Endothelial cell of umbilical vein (primary cell): ENCODE measurements at regions of chr11 and their contacts with region 1.

Region 1: GRCh38 chr11:108497317-108498045 is 703 bp downstream of the POGLUT3 start:
- DNase-seq: peak; percentile 99
- H3K4me3 ChIP-seq: peak overlapping the region; percentile 26 to 71 (median 48)
- H3K27ac ChIP-seq: peak overlapping the region; percentile 81
- H3K4me1 ChIP-seq: peaks cover 10% of the 10 kb centered on the region
- H3K27me3 ChIP-seq: no peaks in the 10 kb centered on the region
- CTCF ChIP-seq: no peak
- POLR2A ChIP-seq: peak; percentile 89

Region 2: DNA sequence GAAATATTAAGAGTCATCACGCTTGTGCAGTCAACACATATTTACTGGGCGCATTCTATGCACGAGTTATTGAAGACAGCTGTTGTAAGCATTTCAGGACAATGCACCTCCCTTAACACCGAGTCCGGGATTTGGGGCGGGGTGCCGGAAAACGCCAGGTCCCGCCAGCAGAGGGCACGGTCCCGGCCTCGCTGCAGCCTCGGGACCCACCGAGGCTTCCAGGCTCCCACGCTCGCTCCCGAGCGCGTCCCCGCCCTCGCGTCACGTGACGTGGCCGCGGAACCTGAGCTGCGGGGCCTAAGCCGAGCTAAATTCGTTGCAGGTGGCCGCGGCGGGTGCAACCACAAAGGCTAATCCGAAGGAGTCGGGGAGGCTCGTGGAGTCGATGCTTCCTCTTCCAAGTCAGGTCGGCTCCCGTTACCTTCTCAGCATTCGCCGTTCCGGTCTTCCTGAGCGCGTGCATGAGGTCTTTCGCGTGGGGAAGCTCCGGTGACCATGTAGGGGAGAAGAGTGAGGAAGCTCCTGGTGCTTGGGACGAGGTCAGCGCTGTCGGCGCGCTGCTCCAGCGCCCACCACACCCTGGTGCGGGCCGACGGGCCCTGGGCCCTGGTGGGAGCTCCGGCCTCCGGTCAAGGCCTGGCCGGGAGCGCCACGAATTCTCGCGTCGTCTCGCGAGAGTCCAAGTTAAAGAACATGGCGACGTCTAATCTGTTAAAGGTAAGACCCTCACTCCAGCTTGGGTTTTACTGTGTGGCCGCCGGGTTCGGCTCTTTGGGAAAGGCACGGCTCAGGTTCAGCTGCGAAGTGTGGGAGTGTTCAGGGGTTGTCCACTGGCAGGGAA is 488.6 kb before region 1 on chr11 and contains the start of gene CUL5:
- CTCF ChIA-PET with region 1: no interaction called
- POLR2A ChIA-PET with region 1: no interaction called
- dilution Hi-C with region 1: no loop called
- intact Hi-C with region 1: loop called (anchors 2 kb)
- DNase-seq: peak; percentile 90
- H3K4me3 ChIP-seq: peak within 1 kb of the TSS; percentile 44 to 88 (median 60)
- H3K27ac ChIP-seq: peak within 1 kb of the TSS; percentile 75
- H3K4me1 ChIP-seq: peaks cover 12% of the 10 kb centered on the region
- H3K27me3 ChIP-seq: no peaks in the 10 kb centered on the region
- CTCF ChIP-seq: peak; percentile 91 to 96
- POLR2A ChIP-seq: peak; percentile 91
- total RNA-seq, gene CUL5: 36.6 and 37.6 TPM in 2 replicates

Region 3: GRCh38 chr11:108237058-108237481 is 260.4 kb before region 1 on chr11:
- CTCF ChIA-PET with region 1: no interaction called
- POLR2A ChIA-PET with region 1: no interaction called
- dilution Hi-C with region 1: no loop called
- intact Hi-C with region 1: loop called (anchors 5 kb)
- DNase-seq: no peak
- H3K4me3 ChIP-seq: no peak overlapping the region
- H3K27ac ChIP-seq: peak overlapping the region; percentile 94
- H3K4me1 ChIP-seq: peaks cover 16% of the 10 kb centered on the region
- H3K27me3 ChIP-seq: no peaks in the 10 kb centered on the region
- CTCF ChIP-seq: no peak
- POLR2A ChIP-seq: no peak

Region 4: DNA sequence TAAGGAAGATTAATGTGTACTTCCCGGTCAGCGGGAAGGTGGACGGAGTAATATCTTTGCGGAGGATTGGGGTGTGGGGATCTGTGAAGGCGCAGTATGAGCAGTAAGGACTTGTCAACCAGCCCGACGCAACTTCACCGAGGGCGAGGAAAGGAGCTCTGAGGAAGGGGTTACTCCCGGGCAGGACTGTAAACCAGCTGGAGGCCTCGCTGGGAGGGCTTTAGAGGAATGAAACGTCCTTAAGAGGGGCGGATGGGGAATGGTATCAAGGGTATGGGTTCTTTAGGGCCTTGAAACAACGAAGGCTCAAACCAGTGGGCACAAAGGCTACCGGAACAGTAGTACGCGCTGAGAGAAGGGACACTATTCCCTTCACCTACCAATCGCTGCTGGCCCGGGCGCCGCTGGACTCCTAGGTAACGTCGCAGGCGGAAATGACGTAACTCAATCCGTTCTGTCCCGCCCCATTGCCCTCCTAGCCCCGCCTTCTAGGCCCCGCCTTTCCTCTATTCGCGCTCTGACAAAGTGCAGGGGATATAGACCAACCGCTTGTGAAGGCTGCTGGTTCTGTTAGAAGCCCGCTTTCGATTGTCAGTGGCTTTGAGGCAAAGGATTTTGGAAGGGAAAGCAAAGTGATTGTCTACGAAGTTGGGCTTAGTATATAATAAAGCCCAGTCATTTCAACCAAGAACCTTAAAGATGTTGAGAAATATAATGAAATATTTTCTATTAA is 30.2 kb before region 1 on chr11 and contains the start of gene C11orf65:
- CTCF ChIA-PET with region 1: no interaction called
- POLR2A ChIA-PET with region 1: interaction called, 3 read pairs
- dilution Hi-C with region 1: no loop called
- intact Hi-C with region 1: loop called (anchors 1 kb)
- DNase-seq: peak; percentile 99
- H3K4me3 ChIP-seq: peak within 1 kb of the TSS; percentile 38 to 86 (median 62)
- H3K27ac ChIP-seq: peak within 1 kb of the TSS; percentile 97
- H3K4me1 ChIP-seq: peaks cover 3% of the 10 kb centered on the region
- H3K27me3 ChIP-seq: no peaks in the 10 kb centered on the region
- CTCF ChIP-seq: no peak
- POLR2A ChIP-seq: peak; percentile 97
- total RNA-seq, gene C11orf65: not detected in 2 replicates

Region 5: DNA sequence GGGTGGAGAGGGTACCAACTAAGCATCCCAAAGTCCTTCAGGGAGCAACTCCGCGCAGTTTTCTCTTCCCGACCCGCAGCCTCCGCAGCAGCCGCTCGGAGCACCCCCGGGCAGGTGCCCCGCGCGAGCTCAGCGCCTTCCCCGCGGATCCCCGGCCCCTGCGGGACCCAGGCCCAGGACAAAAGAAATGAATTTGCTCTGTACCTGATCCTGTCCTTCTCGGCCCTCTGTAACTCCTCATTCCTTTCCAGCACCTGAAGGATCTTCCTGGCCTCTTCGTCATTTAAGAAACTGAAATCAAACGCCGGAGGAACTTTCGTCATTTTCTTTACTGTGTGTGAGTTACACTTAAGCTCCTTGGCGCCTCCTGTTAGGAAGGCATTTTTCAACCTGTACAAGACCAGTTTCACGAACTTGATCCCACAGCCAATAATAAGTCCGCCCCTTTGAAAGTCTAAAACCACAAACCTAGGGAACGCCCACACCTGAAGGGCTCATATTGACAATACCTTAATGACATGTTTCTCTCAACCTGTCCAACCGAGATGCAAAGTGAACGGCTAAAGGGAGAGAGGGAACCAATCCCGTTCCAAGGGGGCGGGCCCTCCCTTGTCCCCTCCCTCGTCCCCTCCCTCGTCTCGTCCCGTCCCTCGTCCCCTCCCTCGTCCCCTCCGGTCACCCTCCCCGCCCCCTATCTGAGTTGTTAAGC is 95.9 kb after region 1 on chr11 and contains the start of gene EXPH5:
- CTCF ChIA-PET with region 1: no interaction called
- POLR2A ChIA-PET with region 1: no interaction called
- dilution Hi-C with region 1: no loop called
- intact Hi-C with region 1: loop called (anchors 2 kb)
- DNase-seq: peak; percentile 80
- H3K4me3 ChIP-seq: peak within 1 kb of the TSS; percentile 47 to 96 (median 81)
- H3K27ac ChIP-seq: no peak within 1 kb of the TSS
- H3K4me1 ChIP-seq: peaks cover 3% of the 10 kb centered on the region
- H3K27me3 ChIP-seq: peaks cover 24 to 35% of the 10 kb centered on the region in 2 experiments
- CTCF ChIP-seq: no peak
- POLR2A ChIP-seq: no peak
- total RNA-seq, gene EXPH5: 0.09 TPM in 1 of 2 replicates, not detected in the other

Region 6: DNA sequence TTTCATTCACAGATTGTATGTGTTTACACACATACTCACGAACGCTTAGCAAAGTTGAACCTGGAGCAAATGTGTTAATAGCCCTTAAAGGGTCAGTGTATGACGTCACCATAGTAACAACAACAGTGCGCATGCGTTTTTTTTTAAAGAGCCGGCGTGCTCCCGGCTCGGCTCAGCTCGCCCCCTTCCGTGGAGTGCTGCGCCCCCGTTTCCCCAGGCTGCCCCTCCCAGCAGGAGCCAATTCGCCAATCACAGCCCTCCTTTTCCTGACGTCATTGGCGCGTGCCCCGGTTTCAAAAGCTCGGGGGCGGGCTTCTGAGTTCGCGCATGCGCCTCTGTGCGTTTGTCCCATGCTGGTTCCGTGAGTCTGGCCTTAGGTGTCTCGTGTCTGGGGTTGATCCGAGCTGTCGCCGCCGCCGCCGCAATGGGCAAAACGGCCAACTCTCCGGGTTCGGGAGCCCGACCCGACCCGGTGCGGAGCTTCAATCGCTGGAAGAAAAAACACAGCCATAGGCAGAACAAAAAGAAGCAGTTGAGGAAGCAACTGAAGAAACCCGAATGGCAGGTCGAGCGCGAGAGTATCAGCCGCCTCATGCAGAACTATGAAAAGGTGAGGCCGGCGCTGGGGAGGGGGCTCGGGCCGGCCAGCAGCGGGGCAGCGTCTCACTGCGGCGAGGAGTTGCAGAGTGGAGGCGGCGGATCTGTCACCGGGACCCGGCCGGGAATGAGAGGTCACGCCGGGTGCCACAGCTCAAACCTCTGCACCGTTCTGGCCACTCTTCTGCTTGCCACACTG is 167.4 kb after region 1 on chr11 and contains the start of gene DDX10:
- CTCF ChIA-PET with region 1: no interaction called
- POLR2A ChIA-PET with region 1: no interaction called
- dilution Hi-C with region 1: no loop called
- intact Hi-C with region 1: loop called (anchors 5 kb)
- DNase-seq: peak; percentile 99
- H3K4me3 ChIP-seq: peak within 1 kb of the TSS; percentile 52 to 96 (median 85)
- H3K27ac ChIP-seq: peak within 1 kb of the TSS; percentile 21
- H3K4me1 ChIP-seq: peaks cover 21% of the 10 kb centered on the region
- H3K27me3 ChIP-seq: no peaks in the 10 kb centered on the region
- CTCF ChIP-seq: peak in 1 of 2 donors; percentile 9
- POLR2A ChIP-seq: no peak
- total RNA-seq, gene DDX10: 35.2 and 48.9 TPM in 2 replicates

Region 7: GRCh38 chr11:108697872-108698473 is 200.5 kb after region 1 on chr11:
- CTCF ChIA-PET with region 1: no interaction called
- POLR2A ChIA-PET with region 1: no interaction called
- dilution Hi-C with region 1: no loop called
- intact Hi-C with region 1: no loop called
- DNase-seq: peak; percentile 78
- H3K4me3 ChIP-seq: no peak overlapping the region
- H3K27ac ChIP-seq: no peak overlapping the region
- H3K4me1 ChIP-seq: no peaks in the 10 kb centered on the region
- H3K27me3 ChIP-seq: no peaks in the 10 kb centered on the region
- CTCF ChIP-seq: peak; percentile 78 to 79
- POLR2A ChIP-seq: no peak